Sigmoid colon (tissue), 7 donors: ENCODE measurements at regions of chr14 and their contacts with region 1.

Region 1: GRCh38 chr14:68076451-68076850 is 256.9 kb downstream of the RAD51B start:
- DNase-seq: no peak
- H3K4me3 ChIP-seq: no peak overlapping the region
- H3K27ac ChIP-seq: no peak overlapping the region
- H3K4me1 ChIP-seq: peaks cover 0 to 29% (median 6%) of the 10 kb centered on the region in 4 donors
- H3K27me3 ChIP-seq: no peaks in the 10 kb centered on the region
- CTCF ChIP-seq: no peak
- EP300 ChIP-seq: no peak
- POLR2A ChIP-seq: no peak

Region 2: GRCh38 chr14:68060198-68060597 is 16.3 kb before region 1 on chr14:
- intact Hi-C with region 1: loop called (anchors 2 kb)
- DNase-seq: no peak
- H3K4me3 ChIP-seq: no peak overlapping the region
- H3K27ac ChIP-seq: peak overlapping the region; percentile 25 to 59 (median 54)
- H3K4me1 ChIP-seq: peaks cover 0 to 19% (median 14%) of the 10 kb centered on the region in 4 donors
- H3K27me3 ChIP-seq: no peaks in the 10 kb centered on the region
- CTCF ChIP-seq: no peak
- EP300 ChIP-seq: no peak
- POLR2A ChIP-seq: no peak